Left lung (tissue), 14 donors: ENCODE measurements at regions of chr10 and their contacts with region 1.

Region 1: GRCh38 chr10:78657163-78657861 is 411.5 kb upstream of the ZMIZ1 start:
- DNase-seq: peak in 3 of 4 donors; percentile 60 to 83 (median 73)
- ATAC-seq: peak; percentile 96
- H3K4me3 ChIP-seq: no peak overlapping the region
- H3K27ac ChIP-seq: no peak overlapping the region
- H3K4me1 ChIP-seq: peaks cover 0 to 11% of the 10 kb centered on the region in 2 donors
- H3K27me3 ChIP-seq: no peaks in the 10 kb centered on the region
- CTCF ChIP-seq: peak; percentile 62 to 64

Region 2: DNA sequence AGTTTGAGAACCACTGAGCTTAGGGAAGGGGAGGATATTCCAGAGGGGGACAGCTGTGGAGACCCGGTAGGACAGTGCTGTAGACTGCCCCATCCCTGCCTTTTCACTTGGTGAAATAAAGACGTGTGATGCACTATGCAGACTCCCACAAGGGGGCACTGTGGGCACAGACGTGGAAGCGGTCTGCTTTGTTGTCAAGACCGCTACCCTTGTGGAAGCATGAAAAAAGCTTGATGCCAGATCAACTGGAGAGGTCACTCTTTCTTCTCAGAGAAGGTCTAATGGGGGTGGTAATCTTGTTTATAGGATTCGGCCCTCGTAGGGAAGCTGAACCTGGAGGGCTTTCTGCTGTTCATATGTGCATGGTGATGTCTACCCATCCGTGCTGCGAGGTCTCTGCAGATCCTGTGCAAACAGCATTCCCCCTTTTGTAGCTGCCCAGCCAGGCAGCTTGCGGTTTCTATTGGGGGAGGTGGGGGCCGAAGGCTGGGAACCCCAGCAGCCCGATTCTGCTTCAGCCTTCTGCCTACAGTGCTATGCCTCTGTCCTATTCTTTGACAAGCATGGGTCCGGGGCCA is 609.9 kb before region 1 on chr10:
- intact Hi-C with region 1: loop called in 1 of 2 experiments (anchors 10 kb)
- DNase-seq: peak; percentile 81 to 90 (median 85)
- ATAC-seq: peak; percentile 95
- H3K4me3 ChIP-seq: no peak overlapping the region
- H3K27ac ChIP-seq: no peak overlapping the region
- H3K4me1 ChIP-seq: peaks cover 3 to 8% of the 10 kb centered on the region in 2 donors
- H3K27me3 ChIP-seq: no peaks in the 10 kb centered on the region
- CTCF ChIP-seq: peak; percentile 76 to 89